ENCODE measurements at regions of chr2 and their contacts with region 1.

Region 1: GRCh38 chr2:109486711-109487535 is 126.8 kb downstream of the SEPTIN10 start:
- DNase-seq: peak; percentile 82
- H3K4me3 ChIP-seq: no peak overlapping the region
- H3K27me3 ChIP-seq: no peaks in the 10 kb centered on the region
- CTCF ChIP-seq: 0 out of 2 replicates have a peak, but pooled peaks have one; percentile 15

Region 2: DNA sequence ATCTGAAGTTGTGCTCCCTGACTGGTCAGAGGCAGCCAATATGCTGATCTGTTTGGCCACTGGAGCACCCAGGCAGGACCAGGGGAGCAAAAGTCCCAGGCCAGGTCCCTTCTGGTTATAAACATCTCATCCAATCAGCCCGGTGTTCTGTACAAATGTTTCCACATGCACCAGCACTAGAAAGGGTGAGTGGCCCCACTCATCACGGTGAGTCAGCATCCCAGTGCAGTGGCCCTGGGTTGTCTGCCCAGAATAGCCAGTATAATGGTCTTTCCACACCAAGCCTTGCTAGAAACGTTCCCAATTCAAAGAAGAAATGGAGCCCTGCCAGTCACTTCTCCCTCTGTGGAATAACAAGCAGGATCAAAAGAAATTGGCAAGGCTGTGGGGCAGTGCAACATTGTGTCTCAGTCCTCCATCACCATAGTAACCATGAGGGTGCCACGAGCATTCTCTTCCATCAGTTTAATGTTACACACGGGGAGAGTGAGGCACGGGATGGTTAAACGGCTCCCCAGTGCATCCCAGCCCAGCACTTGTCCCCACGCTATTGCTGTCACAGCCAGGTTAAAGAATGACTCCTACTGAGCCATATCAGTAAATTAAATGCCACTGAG is 48.0 kb before region 1 on chr2:
- CTCF ChIA-PET with region 1: no interaction called
- POLR2A ChIA-PET with region 1: no interaction called
- DNase-seq: no peak
- H3K4me3 ChIP-seq: no peak overlapping the region
- H3K27me3 ChIP-seq: no peaks in the 10 kb centered on the region
- CTCF ChIP-seq: no peak

Region 3: DNA sequence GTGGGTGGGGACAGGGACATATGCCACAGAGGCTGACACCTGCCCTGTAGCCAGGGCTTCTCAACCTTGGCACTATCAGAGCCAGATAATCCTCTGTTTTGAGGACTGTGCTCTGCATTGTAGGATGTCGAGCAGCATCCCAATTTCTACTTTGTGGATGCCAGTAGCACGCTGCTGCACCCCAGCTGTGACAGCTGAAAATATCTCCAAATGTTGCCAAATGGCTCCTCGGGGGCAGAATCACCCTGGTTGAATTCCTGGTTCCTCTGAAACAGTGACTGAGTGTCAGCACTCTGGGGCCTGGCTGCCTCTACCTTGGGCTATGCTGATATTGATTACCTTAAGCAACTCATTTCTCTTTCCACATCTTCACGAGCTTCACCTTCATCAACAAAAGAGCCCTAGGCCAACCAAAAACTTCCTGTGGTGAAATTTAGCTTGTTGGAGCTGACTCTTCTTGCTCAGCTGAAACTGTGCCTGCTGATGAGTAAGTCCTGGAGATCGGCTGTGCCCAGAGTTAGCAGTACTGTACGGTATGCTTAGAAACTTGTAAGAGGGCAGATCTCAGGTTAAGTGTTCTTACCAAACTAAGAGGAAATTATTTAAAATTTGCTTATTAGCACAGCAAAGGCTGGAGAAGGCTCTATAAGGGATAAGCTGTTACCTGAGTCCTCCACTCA is 11.3 kb before region 1 on chr2:
- CTCF ChIA-PET with region 1: interaction called, 12 read pairs
- POLR2A ChIA-PET with region 1: no interaction called
- DNase-seq: no peak
- H3K4me3 ChIP-seq: no peak overlapping the region
- H3K27me3 ChIP-seq: no peaks in the 10 kb centered on the region
- CTCF ChIP-seq: no peak

Region 4: DNA sequence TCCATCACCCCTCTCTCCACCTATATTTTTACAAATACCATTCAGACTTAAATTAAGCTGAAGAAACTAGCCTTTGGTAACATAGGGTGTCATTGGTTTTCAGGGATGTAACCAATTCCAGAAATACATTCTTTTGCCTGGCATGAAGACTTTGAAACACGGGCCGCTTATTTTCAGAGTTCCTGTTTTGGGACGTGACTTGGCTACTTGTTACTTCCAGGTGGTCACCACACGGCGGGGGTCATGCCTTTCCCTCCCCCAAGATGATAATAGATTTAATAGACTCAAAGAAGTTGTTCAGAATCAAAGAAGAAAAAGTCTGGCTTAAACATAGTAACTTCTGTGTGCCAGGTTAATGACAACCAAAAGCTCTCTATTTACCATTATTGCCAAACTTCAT is 16.3 kb after region 1 on chr2:
- CTCF ChIA-PET with region 1: no interaction called
- POLR2A ChIA-PET with region 1: no interaction called
- DNase-seq: no peak
- H3K4me3 ChIP-seq: no peak overlapping the region
- H3K27me3 ChIP-seq: no peaks in the 10 kb centered on the region
- CTCF ChIP-seq: no peak

Measured in BJ (cell line).